WTC11 (cell line): ENCODE measurements at regions of chrX and their contacts with region 1.

Region 1: GRCh38 chrX:72297953-72298730 is 7.6 kb downstream of the CITED1 start:
- DNase-seq: peak; percentile 33
- ATAC-seq: peak; percentile 96
- H3K4me3 Mint-ChIP-seq: no peak overlapping the region
- H3K27ac Mint-ChIP-seq: no peak overlapping the region
- H3K4me1 Mint-ChIP-seq: peaks cover 4% of the 10 kb centered on the region
- H3K27me3 Mint-ChIP-seq: peaks cover 32% of the 10 kb centered on the region
- CTCF ChIP-seq: peak; percentile 28

Region 2: GRCh38 chrX:72276478-72276953 is 21.6 kb before region 1 on chrX:
- CTCF ChIA-PET with region 1: interaction called, 15 read pairs
- POLR2A ChIA-PET with region 1: no interaction called
- DNase-seq: no peak
- ATAC-seq: no peak
- H3K4me3 Mint-ChIP-seq: peak overlapping the region; percentile 80
- H3K27ac Mint-ChIP-seq: peak overlapping the region; percentile 93; the same call in 1 of the 2 replicates
- H3K4me1 Mint-ChIP-seq: peaks cover 32% of the 10 kb centered on the region
- H3K27me3 Mint-ChIP-seq: no peaks in the 10 kb centered on the region; the same call in 1 of the 2 replicates
- CTCF ChIP-seq: no peak

Region 3: DNA sequence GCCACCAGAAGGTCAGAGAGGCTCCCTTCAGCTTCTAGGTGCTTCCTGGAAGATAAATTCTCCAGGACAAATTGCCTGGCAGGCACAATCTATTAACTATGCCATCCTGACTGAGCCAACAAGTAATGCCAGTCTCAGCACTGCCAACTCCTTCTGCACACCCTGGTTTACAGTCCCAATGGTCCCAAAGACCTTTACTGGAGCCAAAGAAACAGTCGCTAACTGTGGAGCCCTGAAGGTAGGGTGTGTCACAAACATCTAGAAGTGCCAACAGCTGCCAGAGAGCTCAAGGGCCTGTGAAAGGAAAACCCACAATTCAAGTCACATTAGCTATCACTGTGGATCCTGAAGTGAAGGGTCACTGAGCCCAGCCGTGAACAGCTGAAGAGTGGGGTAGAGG is 42.5 kb after region 1 on chrX:
- CTCF ChIA-PET with region 1: interaction called, 23 read pairs
- POLR2A ChIA-PET with region 1: no interaction called
- DNase-seq: no peak
- ATAC-seq: no peak
- H3K4me3 Mint-ChIP-seq: no peak overlapping the region
- H3K27ac Mint-ChIP-seq: no peak overlapping the region
- H3K4me1 Mint-ChIP-seq: peaks cover 11% of the 10 kb centered on the region
- H3K27me3 Mint-ChIP-seq: no peaks in the 10 kb centered on the region
- CTCF ChIP-seq: no peak

Region 4: DNA sequence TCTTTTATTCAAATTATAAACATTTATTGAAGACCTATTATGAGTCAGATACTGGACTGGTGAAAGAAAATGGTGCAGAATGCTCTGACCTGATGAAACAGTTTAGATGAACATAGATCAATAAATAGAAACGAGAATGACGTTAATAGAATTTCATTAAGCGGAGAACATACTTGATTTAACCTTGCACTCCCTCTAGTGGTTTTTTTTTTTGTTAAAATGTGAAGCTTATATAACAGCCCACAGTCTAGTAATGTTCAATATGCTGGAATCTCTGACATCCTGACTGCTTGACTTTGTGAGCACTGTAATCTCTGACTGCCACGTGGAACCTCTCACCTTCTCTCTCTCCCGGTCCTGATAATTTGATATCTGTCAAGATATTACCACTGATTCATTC is 242.2 kb after region 1 on chrX:
- CTCF ChIA-PET with region 1: interaction called, 28 read pairs
- POLR2A ChIA-PET with region 1: no interaction called
- DNase-seq: no peak
- ATAC-seq: no peak
- H3K4me3 Mint-ChIP-seq: no peak overlapping the region
- H3K27ac Mint-ChIP-seq: no peak overlapping the region
- H3K4me1 Mint-ChIP-seq: no peaks in the 10 kb centered on the region
- H3K27me3 Mint-ChIP-seq: no peaks in the 10 kb centered on the region
- CTCF ChIP-seq: no peak

Region 5: GRCh38 chrX:72554448-72555140 is 256.5 kb after region 1 on chrX:
- CTCF ChIA-PET with region 1: interaction called, 15 read pairs
- POLR2A ChIA-PET with region 1: no interaction called
- DNase-seq: peak; percentile 69
- ATAC-seq: peak; percentile 90
- H3K4me3 Mint-ChIP-seq: peak overlapping the region; percentile 68
- H3K27ac Mint-ChIP-seq: peak overlapping the region; percentile 95
- H3K4me1 Mint-ChIP-seq: peaks cover 8% of the 10 kb centered on the region
- H3K27me3 Mint-ChIP-seq: no peaks in the 10 kb centered on the region
- CTCF ChIP-seq: no peak